CD8-positive, alpha-beta memory T cell (primary cell): ENCODE measurements at regions of chr6 and their contacts with region 1.

Region 1: GRCh38 chr6:3281631-3282475 is 23.1 kb downstream of the PSMG4 start:
- DNase-seq: peak in 1 of 5 donors; percentile 18
- H3K4me3 ChIP-seq: no peak overlapping the region
- H3K4me3 Mint-ChIP-seq: no peak overlapping the region
- H3K27ac ChIP-seq: no peak overlapping the region
- H3K27ac Mint-ChIP-seq: peak overlapping the region in 2 of 8 donors; percentile 58 to 80
- H3K4me1 ChIP-seq: peaks cover 3% of the 10 kb centered on the region
- H3K4me1 Mint-ChIP-seq: peaks cover 5 to 6% (median 6%) of the 10 kb centered on the region in 3 donors
- H3K27me3 ChIP-seq: no peaks in the 10 kb centered on the region
- H3K27me3 Mint-ChIP-seq: no peaks in the 10 kb centered on the region

Region 2: GRCh38 chr6:3108746-3109414 is 173.0 kb before region 1 on chr6:
- CTCF ChIA-PET with region 1: no interaction called
- POLR2A ChIA-PET with region 1: no interaction called
- DNase-seq: no peak
- H3K4me3 ChIP-seq: no peak overlapping the region
- H3K4me3 Mint-ChIP-seq: no peak overlapping the region
- H3K27ac ChIP-seq: no peak overlapping the region
- H3K27ac Mint-ChIP-seq: peak overlapping the region; percentile 2 to 80 (median 14)
- H3K4me1 ChIP-seq: no peaks in the 10 kb centered on the region
- H3K4me1 Mint-ChIP-seq: peaks cover 3 to 9% (median 6%) of the 10 kb centered on the region in 3 donors
- H3K27me3 ChIP-seq: no peaks in the 10 kb centered on the region
- H3K27me3 Mint-ChIP-seq: no peaks in the 10 kb centered on the region

Region 3: DNA sequence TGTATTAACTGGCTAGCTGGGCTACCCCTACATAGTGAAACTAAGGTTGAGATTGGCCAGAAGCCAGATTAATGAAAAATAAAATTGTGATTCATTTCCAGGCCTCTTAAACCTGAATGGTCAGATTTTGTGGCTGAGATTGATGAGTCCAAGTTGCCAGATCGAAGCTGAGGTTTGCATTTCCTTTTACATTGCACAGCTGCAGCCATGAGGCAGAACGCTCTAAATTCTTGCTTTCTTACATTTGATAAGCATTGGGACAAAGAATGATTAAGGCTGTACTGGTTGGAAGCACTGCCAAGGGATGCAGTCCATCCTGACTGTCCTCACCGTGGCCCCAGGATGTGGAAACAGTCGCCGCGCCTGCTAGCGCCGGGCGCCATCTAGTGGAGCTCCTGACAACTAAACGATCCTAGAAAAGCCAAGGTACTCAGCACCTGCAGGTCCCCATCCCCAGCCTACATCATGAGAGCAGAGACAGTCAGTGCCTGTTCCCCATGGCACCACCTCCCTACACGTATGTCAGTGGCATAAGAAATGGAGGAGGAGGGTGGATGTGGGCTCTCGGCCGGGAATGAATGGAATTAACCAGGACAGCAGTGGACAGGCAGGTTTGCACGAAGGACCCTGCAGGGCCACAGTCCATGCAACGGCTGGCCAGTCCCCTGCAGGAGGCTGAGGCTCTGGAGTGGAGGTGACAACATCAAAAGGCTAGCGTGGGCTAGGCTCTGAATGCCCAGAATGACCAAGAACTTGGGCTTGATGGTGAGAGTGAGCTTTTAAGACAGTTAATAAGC is 450.7 kb after region 1 on chr6:
- CTCF ChIA-PET with region 1: interaction called, 86 read pairs
- POLR2A ChIA-PET with region 1: no interaction called
- DNase-seq: peak; percentile 45 to 70 (median 46)
- H3K4me3 ChIP-seq: no peak overlapping the region
- H3K4me3 Mint-ChIP-seq: no peak overlapping the region
- H3K27ac ChIP-seq: no peak overlapping the region
- H3K27ac Mint-ChIP-seq: no peak overlapping the region
- H3K4me1 ChIP-seq: no peaks in the 10 kb centered on the region
- H3K4me1 Mint-ChIP-seq: peaks cover 2 to 4% (median 3%) of the 10 kb centered on the region in 3 donors
- H3K27me3 ChIP-seq: no peaks in the 10 kb centered on the region
- H3K27me3 Mint-ChIP-seq: peaks cover 3 to 57% of the 10 kb centered on the region in 2 donors